ENCODE measurements at regions of chr6 and their contacts with region 1.

Region 1: GRCh38 chr6:11496152-11497060 is 41.1 kb upstream of the TMEM170B start:
- DNase-seq: peak; percentile 88
- ATAC-seq: peak; percentile 88
- H3K4me3 ChIP-seq: no peak overlapping the region
- H3K4me3 Mint-ChIP-seq: peak overlapping the region; percentile 40
- H3K27ac ChIP-seq: peak overlapping the region in 1 of 2 donors; percentile 57
- H3K27ac Mint-ChIP-seq: peak overlapping the region; percentile 64
- H3K4me1 ChIP-seq: peaks cover 48 to 52% of the 10 kb centered on the region in 2 donors
- H3K4me1 Mint-ChIP-seq: peaks cover 32% of the 10 kb centered on the region
- H3K27me3 ChIP-seq: no peaks in the 10 kb centered on the region
- H3K27me3 Mint-ChIP-seq: no peaks in the 10 kb centered on the region
- CTCF ChIP-seq: peak; percentile 98

Region 2: DNA sequence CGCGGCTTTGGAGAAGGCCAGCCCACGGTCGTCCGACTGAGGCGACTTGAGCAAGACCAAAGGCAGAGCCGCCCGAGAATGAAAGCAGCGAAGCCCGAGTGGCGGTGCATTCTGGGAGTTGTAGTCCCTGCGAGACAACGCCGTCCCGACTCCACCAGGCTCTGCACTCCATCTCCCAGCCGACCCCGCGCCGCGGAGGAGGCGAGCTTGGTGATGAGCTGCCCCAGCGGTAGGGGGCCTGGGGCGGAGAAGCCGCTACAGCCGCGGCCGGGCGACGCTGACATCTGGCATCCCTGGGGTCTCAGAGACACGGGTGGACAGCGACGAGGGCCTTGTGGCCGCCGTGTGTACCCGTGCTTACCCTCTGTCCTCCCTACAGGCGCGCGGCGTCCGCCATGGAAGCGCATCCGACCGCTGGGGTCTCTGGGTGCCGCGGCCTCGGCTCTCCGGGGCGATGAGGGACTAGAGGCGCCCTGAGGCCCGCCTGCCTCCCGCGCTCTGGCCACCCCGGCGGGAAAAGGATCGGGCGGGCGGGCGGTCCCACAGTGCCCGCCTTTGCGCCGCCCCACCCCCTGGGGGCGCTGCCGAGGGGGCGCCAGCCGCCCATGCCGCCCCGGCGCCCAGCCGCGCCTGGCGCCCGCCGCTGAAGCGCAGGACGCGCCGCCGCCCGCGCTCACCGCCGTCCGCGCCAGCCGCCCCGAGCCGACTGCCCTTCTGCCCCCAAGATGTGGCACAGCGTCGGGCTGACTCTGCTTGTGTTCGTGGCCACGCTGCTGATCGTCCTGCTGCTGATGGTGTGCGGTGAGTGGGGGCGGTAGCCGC is 402.6 kb before region 1 on chr6 and contains the start of gene SMIM13:
- CTCF ChIA-PET with region 1: interaction called, 5 read pairs
- POLR2A ChIA-PET with region 1: no interaction called
- intact Hi-C with region 1: loop called (anchors 1 kb)
- DNase-seq: peak; percentile 96
- ATAC-seq: peak; percentile 90
- H3K4me3 ChIP-seq: peak within 1 kb of the TSS; percentile 65 to 95 (median 89)
- H3K4me3 Mint-ChIP-seq: peak within 1 kb of the TSS; percentile 97
- H3K27ac ChIP-seq: peak within 1 kb of the TSS; percentile 91 to 93
- H3K27ac Mint-ChIP-seq: peak within 1 kb of the TSS; percentile 97
- H3K4me1 ChIP-seq: peaks cover 12% of the 10 kb centered on the region in 2 donors
- H3K4me1 Mint-ChIP-seq: peaks cover 22% of the 10 kb centered on the region
- H3K27me3 ChIP-seq: no peaks in the 10 kb centered on the region
- H3K27me3 Mint-ChIP-seq: peaks cover 3% of the 10 kb centered on the region
- CTCF ChIP-seq: peak; percentile 74
- total RNA-seq, gene SMIM13: 5.5 and 7.0 TPM in 2 replicates

Region 3: GRCh38 chr6:11172501-11173332 is 323.7 kb before region 1 on chr6:
- CTCF ChIA-PET with region 1: interaction called, 334 read pairs
- POLR2A ChIA-PET with region 1: interaction called, 3 read pairs
- intact Hi-C with region 1: loop called (anchors 1 kb)
- DNase-seq: peak; percentile 82
- ATAC-seq: peak; percentile 68
- H3K4me3 ChIP-seq: peak overlapping the region in 3 of 5 experiments; percentile 5 to 44 (median 25)
- H3K4me3 Mint-ChIP-seq: peak overlapping the region; percentile 64
- H3K27ac ChIP-seq: no peak overlapping the region
- H3K27ac Mint-ChIP-seq: no peak overlapping the region
- H3K4me1 ChIP-seq: peaks cover 7 to 9% of the 10 kb centered on the region in 2 donors
- H3K4me1 Mint-ChIP-seq: peaks cover 9% of the 10 kb centered on the region
- H3K27me3 ChIP-seq: no peaks in the 10 kb centered on the region
- H3K27me3 Mint-ChIP-seq: no peaks in the 10 kb centered on the region
- CTCF ChIP-seq: peak; percentile 90

Region 4: GRCh38 chr6:11275598-11275997 is 220.8 kb before region 1 on chr6:
- CTCF ChIA-PET with region 1: interaction called, 8 read pairs
- POLR2A ChIA-PET with region 1: no interaction called
- intact Hi-C with region 1: loop called (anchors 1 kb)
- DNase-seq: peak; percentile 52
- ATAC-seq: peak; percentile 75
- H3K4me3 ChIP-seq: no peak overlapping the region
- H3K4me3 Mint-ChIP-seq: peak overlapping the region; percentile 3
- H3K27ac ChIP-seq: peak overlapping the region in 1 of 2 donors; percentile 69
- H3K27ac Mint-ChIP-seq: peak overlapping the region; percentile 78
- H3K4me1 ChIP-seq: peaks cover 30 to 33% of the 10 kb centered on the region in 2 donors
- H3K4me1 Mint-ChIP-seq: peaks cover 43% of the 10 kb centered on the region
- H3K27me3 ChIP-seq: no peaks in the 10 kb centered on the region
- H3K27me3 Mint-ChIP-seq: no peaks in the 10 kb centered on the region
- CTCF ChIP-seq: no peak

Region 5: GRCh38 chr6:11381801-11382513 is 114.4 kb before region 1 on chr6:
- CTCF ChIA-PET with region 1: interaction called, 29 read pairs
- POLR2A ChIA-PET with region 1: no interaction called
- intact Hi-C with region 1: no loop called
- DNase-seq: peak; percentile 91
- ATAC-seq: peak; percentile 92
- H3K4me3 ChIP-seq: peak overlapping the region; percentile 62 to 93 (median 80)
- H3K4me3 Mint-ChIP-seq: peak overlapping the region; percentile 95
- H3K27ac ChIP-seq: peak overlapping the region; percentile 81 to 85
- H3K27ac Mint-ChIP-seq: peak overlapping the region; percentile 88
- H3K4me1 ChIP-seq: peaks cover 64 to 74% of the 10 kb centered on the region in 2 donors
- H3K4me1 Mint-ChIP-seq: peaks cover 83% of the 10 kb centered on the region
- H3K27me3 ChIP-seq: no peaks in the 10 kb centered on the region
- H3K27me3 Mint-ChIP-seq: no peaks in the 10 kb centered on the region
- CTCF ChIP-seq: no peak

Region 6: GRCh38 chr6:11460001-11460668 is 36.3 kb before region 1 on chr6:
- CTCF ChIA-PET with region 1: interaction called, 26 read pairs
- POLR2A ChIA-PET with region 1: no interaction called
- intact Hi-C with region 1: loop called (anchors 2 kb)
- DNase-seq: peak; percentile 51
- ATAC-seq: peak; percentile 19
- H3K4me3 ChIP-seq: peak overlapping the region; percentile 7 to 58 (median 19)
- H3K4me3 Mint-ChIP-seq: peak overlapping the region; percentile 87
- H3K27ac ChIP-seq: peak overlapping the region; percentile 88 to 96
- H3K27ac Mint-ChIP-seq: peak overlapping the region; percentile 95
- H3K4me1 ChIP-seq: peaks cover 51 to 55% of the 10 kb centered on the region in 2 donors
- H3K4me1 Mint-ChIP-seq: peaks cover 70% of the 10 kb centered on the region
- H3K27me3 ChIP-seq: no peaks in the 10 kb centered on the region
- H3K27me3 Mint-ChIP-seq: no peaks in the 10 kb centered on the region
- CTCF ChIP-seq: no peak

Region 7: DNA sequence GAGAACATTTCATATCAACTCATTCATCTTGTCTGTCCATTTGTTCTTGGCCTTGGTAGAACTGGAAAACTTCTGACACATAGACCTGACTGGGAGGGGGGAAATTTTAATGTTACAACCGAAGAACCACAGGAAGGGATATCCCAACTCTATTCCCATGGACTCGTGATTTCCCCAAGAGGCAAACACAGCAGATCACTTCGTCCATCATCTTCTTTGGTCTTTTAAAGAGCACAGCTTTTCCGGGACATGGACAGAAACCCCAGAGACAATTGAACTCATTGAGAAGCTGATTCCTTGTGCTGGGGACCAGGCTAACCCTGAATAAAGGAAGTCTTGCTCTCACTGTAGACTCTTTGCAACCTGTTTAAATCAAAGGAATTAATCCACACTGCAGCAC is 25.1 kb before region 1 on chr6:
- CTCF ChIA-PET with region 1: no interaction called
- POLR2A ChIA-PET with region 1: no interaction called
- intact Hi-C with region 1: no loop called
- DNase-seq: no peak
- ATAC-seq: no peak
- H3K4me3 ChIP-seq: no peak overlapping the region
- H3K4me3 Mint-ChIP-seq: no peak overlapping the region
- H3K27ac ChIP-seq: no peak overlapping the region
- H3K27ac Mint-ChIP-seq: no peak overlapping the region
- H3K4me1 ChIP-seq: peaks cover 28 to 32% of the 10 kb centered on the region in 2 donors
- H3K4me1 Mint-ChIP-seq: peaks cover 40% of the 10 kb centered on the region
- H3K27me3 ChIP-seq: no peaks in the 10 kb centered on the region
- H3K27me3 Mint-ChIP-seq: no peaks in the 10 kb centered on the region
- CTCF ChIP-seq: no peak

Region 8: DNA sequence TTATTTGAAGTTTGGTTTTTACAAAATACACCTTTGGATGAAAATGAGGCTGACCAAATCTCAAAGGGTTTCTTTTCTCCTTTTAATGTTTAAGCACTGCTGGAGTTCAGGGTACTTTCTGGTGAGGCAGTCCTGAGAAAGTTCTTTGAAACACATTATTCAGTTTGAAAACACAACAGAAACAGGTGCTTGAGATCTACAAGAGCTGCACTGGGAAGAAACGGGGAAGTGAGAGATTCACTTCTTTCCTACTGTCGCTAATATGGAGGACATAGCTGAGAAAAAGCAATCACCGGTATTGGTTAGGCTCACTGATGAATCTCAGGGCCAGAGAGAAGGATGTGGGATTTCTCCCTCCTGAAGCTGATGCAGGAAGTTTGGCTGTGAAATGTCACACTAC is 18.3 kb after region 1 on chr6:
- CTCF ChIA-PET with region 1: interaction called, 18 read pairs
- POLR2A ChIA-PET with region 1: no interaction called
- intact Hi-C with region 1: no loop called
- DNase-seq: peak; percentile 58
- ATAC-seq: peak; percentile 60
- H3K4me3 ChIP-seq: no peak overlapping the region
- H3K4me3 Mint-ChIP-seq: peak overlapping the region; percentile 51
- H3K27ac ChIP-seq: peak overlapping the region; percentile 7 to 52
- H3K27ac Mint-ChIP-seq: peak overlapping the region; percentile 70
- H3K4me1 ChIP-seq: peaks cover 18 to 21% of the 10 kb centered on the region in 2 donors
- H3K4me1 Mint-ChIP-seq: peaks cover 30% of the 10 kb centered on the region
- H3K27me3 ChIP-seq: no peaks in the 10 kb centered on the region
- H3K27me3 Mint-ChIP-seq: no peaks in the 10 kb centered on the region
- CTCF ChIP-seq: no peak

Measured in B cell (primary cell).